ENCODE measurements at regions of chr1 and their contacts with region 1.

Region 1: GRCh38 chr1:206744683-206745082 is 25.9 kb upstream of the IL19 start:
- DNase-seq: peak; percentile 72
- ATAC-seq: peak; percentile 65
- H3K4me3 Mint-ChIP-seq: no peak overlapping the region
- H3K27ac Mint-ChIP-seq: no peak overlapping the region
- H3K4me1 Mint-ChIP-seq: peaks cover 65% of the 10 kb centered on the region
- H3K27me3 Mint-ChIP-seq: peaks cover 32% of the 10 kb centered on the region

Region 2: GRCh38 chr1:206674745-206675175 is 69.9 kb before region 1 on chr1:
- CTCF ChIA-PET with region 1: no interaction called
- DNase-seq: no peak
- ATAC-seq: no peak
- H3K4me3 Mint-ChIP-seq: no peak overlapping the region
- H3K27ac Mint-ChIP-seq: no peak overlapping the region
- H3K4me1 Mint-ChIP-seq: peaks cover 8% of the 10 kb centered on the region
- H3K27me3 Mint-ChIP-seq: peaks cover 7% of the 10 kb centered on the region

Region 3: GRCh38 chr1:206693029-206693428 is 51.7 kb before region 1 on chr1:
- CTCF ChIA-PET with region 1: no interaction called
- DNase-seq: no peak
- ATAC-seq: no peak
- H3K4me3 Mint-ChIP-seq: no peak overlapping the region
- H3K27ac Mint-ChIP-seq: no peak overlapping the region
- H3K4me1 Mint-ChIP-seq: peaks cover 60% of the 10 kb centered on the region
- H3K27me3 Mint-ChIP-seq: no peaks in the 10 kb centered on the region

Region 4: DNA sequence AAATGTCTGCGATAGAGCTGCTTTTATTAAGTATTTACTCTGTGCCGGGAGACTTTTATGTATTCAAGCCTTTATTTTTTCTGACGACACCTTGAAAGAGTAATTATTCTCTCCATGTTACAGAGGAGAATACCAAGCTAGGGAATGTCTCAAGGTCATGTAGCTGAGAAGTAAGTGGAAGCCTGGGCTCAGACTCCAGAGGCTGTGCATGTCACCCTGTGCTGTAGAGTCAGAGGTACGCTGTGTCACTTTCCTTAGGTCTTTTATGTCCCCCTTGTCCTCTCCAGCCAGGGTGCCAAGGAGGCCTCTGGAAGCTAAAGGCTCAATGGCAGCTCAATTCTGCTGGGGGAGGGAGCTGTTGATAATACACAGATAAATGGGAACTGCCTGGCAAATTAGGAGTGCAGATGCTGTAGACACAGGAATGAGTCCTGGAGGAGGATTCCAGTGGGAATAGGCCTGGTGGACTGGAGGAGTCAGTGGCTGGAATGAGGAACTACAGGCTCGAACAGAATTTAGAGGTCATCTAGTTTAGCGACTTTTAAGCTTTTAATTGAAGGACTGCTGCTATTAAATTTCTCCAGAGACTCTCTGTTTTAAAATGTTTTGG is 16.6 kb after region 1 on chr1:
- CTCF ChIA-PET with region 1: interaction called, 19 read pairs
- DNase-seq: no peak
- ATAC-seq: no peak
- H3K4me3 Mint-ChIP-seq: no peak overlapping the region
- H3K27ac Mint-ChIP-seq: no peak overlapping the region
- H3K4me1 Mint-ChIP-seq: peaks cover 33% of the 10 kb centered on the region
- H3K27me3 Mint-ChIP-seq: peaks cover 34% of the 10 kb centered on the region